Naive thymus-derived CD4-positive, alpha-beta T cell (primary cell): ENCODE measurements at regions of chr18 and their contacts with region 1.

Region 1: GRCh38 chr18:62714671-62715435 is 488 bp upstream of the PHLPP1 start:
- DNase-seq: peak; percentile 82 to 91 (median 88)
- ATAC-seq: peak; percentile 86
- H3K4me3 ChIP-seq: peak overlapping the region; percentile 84
- H3K4me3 Mint-ChIP-seq: peak overlapping the region; percentile 80 to 96 (median 90)
- H3K27ac ChIP-seq: peak overlapping the region; percentile 78
- H3K27ac Mint-ChIP-seq: peak overlapping the region; percentile 84 to 99 (median 95)
- H3K4me1 ChIP-seq: peaks cover 0 to 12% of the 10 kb centered on the region in 2 donors
- H3K4me1 Mint-ChIP-seq: peaks cover 11 to 34% (median 30%) of the 10 kb centered on the region in 7 donors
- H3K27me3 ChIP-seq: no peaks in the 10 kb centered on the region
- H3K27me3 Mint-ChIP-seq: peaks cover 0 to 22% (median 0%) of the 10 kb centered on the region in 5 donors

Region 2: GRCh38 chr18:61322265-61322873 is 1392.5 kb before region 1 on chr18:
- CTCF ChIA-PET with region 1: no interaction called
- POLR2A ChIA-PET with region 1: no interaction called
- intact Hi-C with region 1: no loop called
- DNase-seq: peak in 1 of 9 donors; percentile 45
- ATAC-seq: peak; percentile 41
- H3K4me3 ChIP-seq: no peak overlapping the region
- H3K4me3 Mint-ChIP-seq: no peak overlapping the region
- H3K27ac ChIP-seq: no peak overlapping the region
- H3K27ac Mint-ChIP-seq: no peak overlapping the region
- H3K4me1 ChIP-seq: no peaks in the 10 kb centered on the region
- H3K4me1 Mint-ChIP-seq: no peaks in the 10 kb centered on the region
- H3K27me3 ChIP-seq: no peaks in the 10 kb centered on the region
- H3K27me3 Mint-ChIP-seq: peaks cover 0 to 17% (median 6%) of the 10 kb centered on the region in 5 donors

Region 3: DNA sequence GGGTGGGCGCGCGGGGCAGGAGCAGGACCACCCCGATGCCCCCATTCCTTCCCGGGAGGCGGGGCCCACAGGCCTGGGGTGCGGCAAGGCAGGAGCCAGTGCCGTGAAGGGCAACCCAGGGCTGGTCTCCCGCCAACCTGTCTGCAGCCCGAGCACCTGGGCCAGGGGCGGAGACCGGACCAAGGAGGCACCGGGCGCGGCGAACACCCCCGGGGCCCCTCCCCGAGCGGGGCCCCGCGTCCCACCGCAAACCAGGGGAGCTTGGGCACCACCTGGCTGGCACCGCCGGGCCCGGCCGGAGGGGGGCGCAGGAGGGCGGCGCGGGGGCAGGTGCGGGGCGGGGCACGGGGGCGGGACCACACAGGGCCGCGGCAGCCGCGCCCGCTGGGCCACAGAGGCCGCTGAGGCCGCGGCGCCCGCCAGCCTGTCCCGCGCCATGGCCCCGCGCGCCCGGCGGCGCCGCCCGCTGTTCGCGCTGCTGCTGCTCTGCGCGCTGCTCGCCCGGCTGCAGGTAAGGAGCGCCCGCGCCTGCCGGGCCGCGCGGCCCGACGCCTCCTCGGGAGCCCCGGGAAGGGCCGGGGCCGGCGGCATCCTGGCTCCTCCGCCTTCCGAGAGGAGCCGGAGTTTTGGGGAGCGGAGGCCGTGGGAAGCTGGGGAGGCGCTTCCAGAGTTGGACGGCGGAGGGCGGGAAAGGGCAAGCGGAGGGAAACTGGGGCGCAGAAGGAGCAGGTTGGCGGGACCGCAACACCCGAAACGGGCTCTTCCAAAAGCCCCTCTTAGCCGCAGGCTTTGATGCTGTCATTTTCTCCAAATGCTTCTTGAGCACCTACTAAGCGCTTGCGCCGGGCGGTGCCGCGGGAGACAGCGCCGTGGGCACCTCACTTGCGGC is 389.7 kb before region 1 on chr18 and contains the start of gene TNFRSF11A:
- CTCF ChIA-PET with region 1: no interaction called
- POLR2A ChIA-PET with region 1: no interaction called
- intact Hi-C with region 1: loop called (anchors 2 to 10 kb)
- DNase-seq: peak; percentile 19 to 83 (median 46)
- ATAC-seq: peak; percentile 91
- H3K4me3 ChIP-seq: peak within 1 kb of the TSS; percentile 50
- H3K4me3 Mint-ChIP-seq: peak within 1 kb of the TSS; percentile 80 to 93 (median 84)
- H3K27ac ChIP-seq: no peak within 1 kb of the TSS
- H3K27ac Mint-ChIP-seq: peak within 1 kb of the TSS in 5 of 9 donors; percentile 15 to 73 (median 65)
- H3K4me1 ChIP-seq: peaks cover 14 to 17% of the 10 kb centered on the region in 2 donors
- H3K4me1 Mint-ChIP-seq: peaks cover 18 to 53% (median 34%) of the 10 kb centered on the region in 7 donors
- H3K27me3 ChIP-seq: peaks cover 12 to 20% of the 10 kb centered on the region in 2 donors
- H3K27me3 Mint-ChIP-seq: peaks cover 46 to 78% (median 70%) of the 10 kb centered on the region in 5 donors
- total RNA-seq, gene TNFRSF11A: 0.16 to 22.2 (median 0.68) TPM

Region 4: DNA sequence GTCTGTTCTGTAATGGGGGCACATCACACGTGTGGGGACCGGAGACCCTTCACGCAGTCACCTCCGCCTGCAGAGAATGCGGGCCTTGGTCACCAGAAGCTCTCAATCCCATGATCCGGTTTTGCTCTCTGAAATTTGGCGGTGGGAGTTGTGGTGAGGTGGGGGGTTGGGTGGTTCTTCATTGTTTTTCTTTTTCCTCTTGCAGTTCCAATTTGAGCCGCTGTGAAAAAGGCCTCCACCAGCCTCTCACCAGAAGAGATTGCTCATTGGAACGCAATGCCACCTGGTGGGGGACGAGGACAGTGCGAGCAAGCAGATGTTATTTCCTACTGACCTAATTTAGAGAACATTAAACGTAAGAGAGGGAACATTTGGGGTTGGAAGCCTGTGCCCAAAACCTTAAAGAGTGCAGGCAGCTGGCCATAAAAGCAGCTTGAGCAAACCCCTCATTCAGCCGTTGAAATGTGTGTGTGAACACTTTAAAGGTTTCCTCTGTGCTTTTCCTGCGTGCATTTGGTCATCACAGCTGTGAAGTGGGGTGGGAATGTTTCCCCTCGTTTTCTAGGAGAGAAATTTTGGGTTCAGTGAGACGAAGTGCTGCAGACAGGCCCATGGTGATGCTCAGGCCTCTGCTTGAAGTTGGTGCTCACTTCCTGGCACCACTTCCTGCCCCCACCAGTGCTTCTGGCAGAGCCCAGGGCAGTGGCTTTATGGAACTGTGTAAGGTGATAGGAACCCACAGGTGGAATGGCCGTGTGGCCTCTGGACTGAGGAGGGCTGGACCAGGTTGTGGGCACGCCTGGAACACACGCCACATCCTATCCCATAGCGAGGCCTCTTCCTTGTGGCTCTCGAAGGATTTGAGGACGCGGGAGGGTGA is 130.4 kb before region 1 on chr18:
- CTCF ChIA-PET with region 1: interaction called, 3 read pairs
- POLR2A ChIA-PET with region 1: no interaction called
- intact Hi-C with region 1: loop called (anchors 2 kb)
- DNase-seq: peak; percentile 61 to 85 (median 82)
- ATAC-seq: peak; percentile 99
- H3K4me3 ChIP-seq: no peak overlapping the region
- H3K4me3 Mint-ChIP-seq: peak overlapping the region; percentile 18 to 65 (median 58)
- H3K27ac ChIP-seq: no peak overlapping the region
- H3K27ac Mint-ChIP-seq: peak overlapping the region; percentile 26 to 83 (median 72)
- H3K4me1 ChIP-seq: peaks cover 18 to 22% of the 10 kb centered on the region in 2 donors
- H3K4me1 Mint-ChIP-seq: peaks cover 17 to 50% (median 32%) of the 10 kb centered on the region in 7 donors
- H3K27me3 ChIP-seq: no peaks in the 10 kb centered on the region
- H3K27me3 Mint-ChIP-seq: no peaks in the 10 kb centered on the region

Region 5: GRCh38 chr18:62802523-62802922 is 87.7 kb after region 1 on chr18:
- CTCF ChIA-PET with region 1: interaction called, 5 read pairs
- POLR2A ChIA-PET with region 1: no interaction called
- intact Hi-C with region 1: loop called (anchors 1 to 5 kb)
- DNase-seq: no peak
- ATAC-seq: no peak
- H3K4me3 ChIP-seq: no peak overlapping the region
- H3K4me3 Mint-ChIP-seq: no peak overlapping the region
- H3K27ac ChIP-seq: no peak overlapping the region
- H3K27ac Mint-ChIP-seq: no peak overlapping the region
- H3K4me1 ChIP-seq: no peaks in the 10 kb centered on the region
- H3K4me1 Mint-ChIP-seq: peaks cover 0 to 8% (median 0%) of the 10 kb centered on the region in 7 donors
- H3K27me3 ChIP-seq: no peaks in the 10 kb centered on the region
- H3K27me3 Mint-ChIP-seq: peaks cover 0 to 4% (median 0%) of the 10 kb centered on the region in 5 donors

Region 6: DNA sequence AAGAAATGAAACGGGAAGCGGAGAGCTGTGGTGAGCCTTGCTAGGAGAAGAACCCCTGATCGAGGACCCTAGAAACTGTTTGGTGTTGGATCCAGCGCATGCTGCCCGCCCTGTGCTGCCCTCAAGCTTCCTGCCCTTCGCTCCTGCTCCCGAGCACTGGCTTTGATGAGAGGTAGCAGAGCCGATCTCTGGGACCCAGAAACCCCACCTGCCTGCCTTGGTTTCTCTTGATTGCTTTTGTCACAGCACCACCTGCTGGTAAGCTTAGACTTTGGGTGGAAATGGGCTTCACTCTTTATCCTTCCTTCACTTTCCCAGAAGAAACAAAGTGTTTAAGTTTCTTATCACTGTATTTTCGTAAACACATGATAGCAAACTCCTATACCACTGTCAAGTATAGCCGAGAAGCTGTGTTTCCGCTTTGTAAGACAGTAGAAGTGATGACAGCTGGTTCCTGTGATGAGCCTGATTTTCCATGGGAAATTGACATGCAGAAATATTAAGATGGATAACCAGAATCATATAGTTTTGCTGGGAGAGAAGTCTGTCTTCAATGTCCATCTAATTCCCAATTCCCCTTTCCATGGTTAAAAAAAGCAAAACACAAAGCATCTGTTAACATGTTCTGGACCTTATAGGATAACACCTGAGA is 267.9 kb after region 1 on chr18:
- CTCF ChIA-PET with region 1: interaction called, 17 read pairs
- POLR2A ChIA-PET with region 1: interaction called, 4 read pairs
- intact Hi-C with region 1: loop called (anchors 1 kb)
- DNase-seq: peak in 8 of 9 donors; percentile 29 to 60 (median 52)
- ATAC-seq: peak; percentile 70
- H3K4me3 ChIP-seq: peak overlapping the region; percentile 11
- H3K4me3 Mint-ChIP-seq: peak overlapping the region in 8 of 10 donors; percentile 33 to 78 (median 60)
- H3K27ac ChIP-seq: no peak overlapping the region
- H3K27ac Mint-ChIP-seq: peak overlapping the region in 1 of 9 donors; percentile 80
- H3K4me1 ChIP-seq: no peaks in the 10 kb centered on the region
- H3K4me1 Mint-ChIP-seq: peaks cover 0 to 7% (median 5%) of the 10 kb centered on the region in 7 donors
- H3K27me3 ChIP-seq: no peaks in the 10 kb centered on the region
- H3K27me3 Mint-ChIP-seq: peaks cover 0 to 2% (median 0%) of the 10 kb centered on the region in 5 donors

Region 7: GRCh38 chr18:63339920-63340484 is 625.1 kb after region 1 on chr18:
- CTCF ChIA-PET with region 1: no interaction called
- POLR2A ChIA-PET with region 1: no interaction called
- intact Hi-C with region 1: loop called in 1 of 2 experiments (anchors 1 kb)
- DNase-seq: peak in 7 of 9 donors; percentile 29 to 59 (median 51)
- ATAC-seq: peak; percentile 82
- H3K4me3 ChIP-seq: no peak overlapping the region
- H3K4me3 Mint-ChIP-seq: no peak overlapping the region
- H3K27ac ChIP-seq: no peak overlapping the region
- H3K27ac Mint-ChIP-seq: peak overlapping the region in 1 of 9 donors; percentile 29
- H3K4me1 ChIP-seq: no peaks in the 10 kb centered on the region
- H3K4me1 Mint-ChIP-seq: peaks cover 0 to 9% (median 5%) of the 10 kb centered on the region in 7 donors
- H3K27me3 ChIP-seq: no peaks in the 10 kb centered on the region
- H3K27me3 Mint-ChIP-seq: no peaks in the 10 kb centered on the region

Region 8: GRCh38 chr18:63969960-63970802 is 1255.3 kb after region 1 on chr18 and contains the start of gene SERPINB8:
- CTCF ChIA-PET with region 1: no interaction called
- POLR2A ChIA-PET with region 1: no interaction called
- intact Hi-C with region 1: loop called (anchors 1 to 10 kb)
- DNase-seq: peak; percentile 44 to 84 (median 77)
- ATAC-seq: peak; percentile 89
- H3K4me3 ChIP-seq: peak within 1 kb of the TSS; percentile 93
- H3K4me3 Mint-ChIP-seq: peak within 1 kb of the TSS; percentile 88 to 98 (median 94)
- H3K27ac ChIP-seq: peak within 1 kb of the TSS; percentile 96
- H3K27ac Mint-ChIP-seq: peak within 1 kb of the TSS; percentile 92 to 97 (median 94)
- H3K4me1 ChIP-seq: peaks cover 13% of the 10 kb centered on the region in 2 donors
- H3K4me1 Mint-ChIP-seq: peaks cover 26 to 42% (median 31%) of the 10 kb centered on the region in 7 donors
- H3K27me3 ChIP-seq: no peaks in the 10 kb centered on the region
- H3K27me3 Mint-ChIP-seq: peaks cover 0 to 25% (median 1%) of the 10 kb centered on the region in 5 donors
- total RNA-seq, gene SERPINB8: 9.2 to 15.7 (median 10.0) TPM